H1 (cell line): ENCODE measurements at regions of chr3 and their contacts with region 1.

Region 1: GRCh38 chr3:11060500-11061251 is 68.1 kb downstream of the SLC6A1 start:
- DNase-seq: peak in 1 of 2 experiments; percentile 89
- H3K4me3 ChIP-seq: peak overlapping the region; percentile 4 to 57 (median 35); a peak in 7 of 8 replicates
- H3K27ac ChIP-seq: no peak overlapping the region
- H3K4me1 ChIP-seq: peaks cover 0 to 6% (median 1%) of the 10 kb centered on the region in 4 experiments; a peak in 2 of 7 replicates
- H3K27me3 ChIP-seq: peaks cover 9 to 21% (median 14%) of the 10 kb centered on the region in 4 experiments; a peak in 6 of 7 replicates
- CTCF ChIP-seq: peak; percentile 84 to 93 (median 85)
- EP300 ChIP-seq: no peak
- POLR2A ChIP-seq: no peak
- RAD21 ChIP-seq: peak; percentile 73 to 84

Region 2: GRCh38 chr3:10594921-10595320 is 465.8 kb before region 1 on chr3:
- CTCF ChIA-PET with region 1: no interaction called
- POLR2A ChIA-PET with region 1: no interaction called
- DNase-seq: peak; percentile 57 to 89
- H3K4me3 ChIP-seq: no peak overlapping the region
- H3K27ac ChIP-seq: no peak overlapping the region
- H3K4me1 ChIP-seq: no peaks in the 10 kb centered on the region
- H3K27me3 ChIP-seq: no peaks in the 10 kb centered on the region; a peak in 1 of 7 replicates
- CTCF ChIP-seq: no peak
- EP300 ChIP-seq: no peak
- POLR2A ChIP-seq: no peak
- RAD21 ChIP-seq: no peak

Region 3: DNA sequence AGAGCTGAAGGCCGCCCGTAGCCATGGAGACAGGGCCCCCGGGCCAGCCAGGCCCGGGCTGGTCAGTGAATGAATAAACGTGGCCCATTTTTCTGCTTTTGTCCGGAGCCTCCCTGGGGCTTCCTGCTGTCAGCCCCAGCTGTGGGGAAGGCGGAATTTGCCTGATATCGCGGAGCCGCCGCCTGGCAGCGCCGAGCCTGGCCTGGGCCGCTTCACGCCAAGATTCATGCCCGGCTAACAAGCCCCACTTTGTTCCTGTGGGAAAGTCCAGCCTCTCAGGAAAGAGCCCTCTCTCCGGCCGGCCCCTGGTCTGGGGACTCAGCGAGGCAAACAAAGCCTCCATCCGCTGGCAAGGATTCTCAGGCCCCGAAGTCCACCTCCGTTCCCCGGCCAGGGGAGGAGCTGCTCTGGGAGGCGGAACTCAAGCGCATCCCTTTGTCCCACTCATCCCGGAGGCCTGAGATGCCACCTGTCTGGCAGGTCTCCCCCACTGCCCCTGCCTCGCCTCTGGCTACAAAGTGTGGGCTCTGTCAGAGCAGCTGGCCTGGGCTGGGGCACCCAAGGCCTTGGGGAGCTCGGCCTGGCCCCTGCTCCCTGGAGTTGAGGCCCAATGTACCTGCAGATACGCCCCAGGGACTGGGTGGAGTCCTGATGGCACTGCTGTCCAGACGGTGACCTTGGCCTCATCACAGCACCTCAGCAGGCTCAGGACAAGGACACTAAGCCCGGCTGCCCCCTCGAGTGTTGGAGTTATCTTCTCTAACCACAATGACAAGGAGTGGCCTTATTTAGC is 296.2 kb before region 1 on chr3:
- CTCF ChIA-PET with region 1: interaction called, 101 read pairs
- POLR2A ChIA-PET with region 1: no interaction called
- DNase-seq: peak in 1 of 2 experiments; percentile 55
- H3K4me3 ChIP-seq: no peak overlapping the region
- H3K27ac ChIP-seq: no peak overlapping the region
- H3K4me1 ChIP-seq: peaks cover 0 to 7% (median 3%) of the 10 kb centered on the region in 4 experiments; a peak in 3 of 7 replicates
- H3K27me3 ChIP-seq: no peaks in the 10 kb centered on the region; a peak in 1 of 7 replicates
- CTCF ChIP-seq: no peak
- EP300 ChIP-seq: no peak
- POLR2A ChIP-seq: no peak
- RAD21 ChIP-seq: no peak

Region 4: GRCh38 chr3:10945683-10946287 is 114.9 kb before region 1 on chr3:
- CTCF ChIA-PET with region 1: interaction called, 211 read pairs
- POLR2A ChIA-PET with region 1: no interaction called
- DNase-seq: peak; percentile 64 to 92
- H3K4me3 ChIP-seq: no peak overlapping the region
- H3K27ac ChIP-seq: no peak overlapping the region
- H3K4me1 ChIP-seq: no peaks in the 10 kb centered on the region
- H3K27me3 ChIP-seq: no peaks in the 10 kb centered on the region; a peak in 1 of 7 replicates
- CTCF ChIP-seq: peak; percentile 79 to 96 (median 89)
- EP300 ChIP-seq: no peak
- POLR2A ChIP-seq: no peak
- RAD21 ChIP-seq: peak; percentile 84 to 94

Region 5: GRCh38 chr3:11006986-11007933 is 53.4 kb before region 1 on chr3:
- CTCF ChIA-PET with region 1: interaction called, 60 read pairs
- POLR2A ChIA-PET with region 1: no interaction called
- DNase-seq: peak in 1 of 2 experiments; percentile 61
- H3K4me3 ChIP-seq: no peak overlapping the region
- H3K27ac ChIP-seq: no peak overlapping the region
- H3K4me1 ChIP-seq: peaks cover 0 to 4% (median 0%) of the 10 kb centered on the region in 4 experiments; a peak in 3 of 7 replicates
- H3K27me3 ChIP-seq: no peaks in the 10 kb centered on the region
- CTCF ChIP-seq: peak; percentile 48 to 70 (median 56)
- EP300 ChIP-seq: no peak
- POLR2A ChIP-seq: no peak
- RAD21 ChIP-seq: peak; percentile 36 to 45; a peak in 3 of 4 replicates

Region 6: GRCh38 chr3:11037241-11037873 is 23.3 kb before region 1 on chr3:
- CTCF ChIA-PET with region 1: interaction called, 26 read pairs
- POLR2A ChIA-PET with region 1: no interaction called
- DNase-seq: no peak
- H3K4me3 ChIP-seq: no peak overlapping the region
- H3K27ac ChIP-seq: no peak overlapping the region
- H3K4me1 ChIP-seq: no peaks in the 10 kb centered on the region
- H3K27me3 ChIP-seq: no peaks in the 10 kb centered on the region
- CTCF ChIP-seq: no peak
- EP300 ChIP-seq: no peak
- POLR2A ChIP-seq: no peak
- RAD21 ChIP-seq: no peak

Region 7: DNA sequence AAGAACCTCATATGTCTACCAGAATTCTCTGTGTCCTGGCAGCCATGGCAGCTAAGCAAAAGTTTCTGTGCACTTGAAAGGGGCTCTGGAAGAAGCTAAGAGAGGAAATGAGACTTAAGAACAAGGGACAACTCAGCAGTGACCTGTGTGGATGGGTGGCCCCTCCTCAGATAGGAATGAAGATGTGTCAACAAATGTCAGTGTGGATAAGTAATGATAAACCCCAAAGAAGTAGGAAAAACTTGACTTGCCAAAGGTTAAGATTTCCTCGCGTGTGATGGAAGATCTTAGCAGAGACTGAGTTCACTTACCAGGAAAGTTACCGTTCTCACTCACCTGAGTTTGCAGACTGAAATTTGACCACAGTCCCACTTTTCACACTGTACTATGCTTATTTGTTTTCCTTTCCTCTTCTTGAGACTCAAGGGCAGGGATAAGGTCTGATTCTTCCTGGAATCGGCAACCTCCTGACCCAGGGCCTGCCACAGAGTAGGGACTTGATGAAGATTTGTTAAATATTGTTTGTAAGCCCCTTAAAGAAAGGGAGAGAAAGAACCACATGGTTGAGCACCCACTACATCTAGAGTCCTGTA is 86.2 kb after region 1 on chr3:
- CTCF ChIA-PET with region 1: interaction called, 13 read pairs
- POLR2A ChIA-PET with region 1: no interaction called
- DNase-seq: no peak
- H3K4me3 ChIP-seq: no peak overlapping the region
- H3K27ac ChIP-seq: no peak overlapping the region
- H3K4me1 ChIP-seq: no peaks in the 10 kb centered on the region
- H3K27me3 ChIP-seq: no peaks in the 10 kb centered on the region; a peak in 1 of 7 replicates
- CTCF ChIP-seq: no peak
- EP300 ChIP-seq: no peak
- POLR2A ChIP-seq: no peak
- RAD21 ChIP-seq: no peak

Region 8: DNA sequence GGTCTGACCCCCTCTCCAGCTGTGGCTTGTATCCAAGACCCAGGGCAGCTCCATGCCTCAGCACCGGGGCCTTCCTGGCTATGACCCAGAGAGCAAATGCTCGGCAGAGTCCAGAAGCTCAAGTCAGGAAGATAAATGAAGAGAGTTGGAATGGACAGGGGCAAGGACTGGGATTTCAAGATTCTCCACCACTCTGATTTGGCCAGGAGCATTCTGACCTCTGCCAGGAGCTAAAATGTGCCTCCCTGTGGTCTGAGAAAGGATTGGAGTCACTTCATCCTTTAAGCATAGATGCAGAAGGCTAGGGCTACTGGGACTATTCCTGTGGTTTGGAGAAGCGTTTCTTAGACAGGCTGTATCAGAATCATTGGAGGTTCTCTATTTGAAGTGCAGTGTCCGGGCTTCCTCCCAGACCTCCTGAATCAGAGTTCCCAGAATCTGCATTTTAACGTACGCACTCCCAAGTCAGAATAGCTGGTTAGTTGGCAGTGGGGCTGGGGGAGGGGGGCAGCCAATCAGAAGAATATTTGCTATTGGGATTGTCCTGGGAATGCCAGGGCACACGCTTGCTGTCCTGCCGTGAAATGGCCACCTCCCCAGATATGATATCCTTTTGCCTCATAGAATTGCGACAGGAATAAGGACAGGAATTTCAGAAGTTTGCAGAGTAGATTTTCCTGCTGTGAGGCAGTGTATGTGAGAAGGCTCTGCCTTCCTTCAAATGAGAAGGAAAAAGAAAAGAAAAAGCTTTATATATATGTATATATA is 151.0 kb after region 1 on chr3:
- CTCF ChIA-PET with region 1: interaction called, 40 read pairs
- POLR2A ChIA-PET with region 1: no interaction called
- DNase-seq: no peak
- H3K4me3 ChIP-seq: no peak overlapping the region
- H3K27ac ChIP-seq: no peak overlapping the region
- H3K4me1 ChIP-seq: no peaks in the 10 kb centered on the region
- H3K27me3 ChIP-seq: no peaks in the 10 kb centered on the region
- CTCF ChIP-seq: peak in 2 of 3 experiments; percentile 22 to 28; a peak in 2 of 4 replicates
- EP300 ChIP-seq: no peak
- POLR2A ChIP-seq: no peak
- RAD21 ChIP-seq: peak; percentile 18 to 35